ENCODE measurements at regions of chr7 and their contacts with region 1.

Region 1: DNA sequence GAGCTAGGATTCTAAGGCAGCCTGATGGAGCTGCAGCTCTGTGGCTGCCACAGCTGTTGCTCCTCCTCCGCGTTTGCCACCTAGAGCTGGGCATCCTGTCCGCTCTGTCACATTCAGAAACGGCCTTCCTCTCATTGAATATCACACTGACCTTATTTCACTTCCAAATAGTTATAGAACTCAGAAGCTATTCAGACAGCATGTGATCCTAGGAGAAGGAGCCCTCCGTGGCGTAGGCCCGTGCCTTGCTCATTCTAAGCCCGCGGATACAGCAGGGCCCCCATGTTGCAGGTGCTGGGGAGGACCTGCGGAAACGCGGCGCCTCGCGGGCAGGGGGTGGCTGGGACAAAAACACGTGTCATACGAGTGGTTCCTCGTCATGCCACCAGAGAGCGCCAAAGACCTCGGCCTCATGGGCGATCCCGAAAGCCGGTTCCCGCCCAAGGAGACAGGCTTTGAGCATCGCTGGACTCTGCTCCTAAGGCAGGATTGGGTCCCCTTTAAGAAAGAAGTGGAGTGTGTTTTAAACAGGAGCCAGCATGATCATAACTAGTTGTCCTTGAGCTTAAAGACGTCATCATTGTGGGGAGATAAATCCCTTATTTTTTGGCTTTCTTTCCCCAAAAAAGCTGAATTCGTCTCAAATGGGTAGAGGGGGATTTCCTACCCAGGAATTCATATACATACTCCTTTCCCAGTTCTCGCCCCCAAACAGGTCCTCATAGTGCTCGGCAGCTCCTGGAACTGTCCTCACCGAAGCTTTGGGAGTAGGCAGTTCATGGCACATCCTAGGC is 17.9 kb upstream of the FIGNL1 start:
- DNase-seq: peak; percentile 90
- H3K4me3 Mint-ChIP-seq: no peak overlapping the region
- H3K27ac Mint-ChIP-seq: no peak overlapping the region
- H3K4me1 Mint-ChIP-seq: peaks cover 9% of the 10 kb centered on the region
- H3K27me3 Mint-ChIP-seq: no peaks in the 10 kb centered on the region

Region 2: GRCh38 chr7:50119815-50120637 is 348.0 kb before region 1 on chr7:
- CTCF ChIA-PET with region 1: interaction called, 5 read pairs
- intact Hi-C with region 1: loop called (anchors 1 kb)
- DNase-seq: peak; percentile 57
- H3K4me3 Mint-ChIP-seq: no peak overlapping the region
- H3K27ac Mint-ChIP-seq: no peak overlapping the region
- H3K4me1 Mint-ChIP-seq: no peaks in the 10 kb centered on the region
- H3K27me3 Mint-ChIP-seq: no peaks in the 10 kb centered on the region

Region 3: DNA sequence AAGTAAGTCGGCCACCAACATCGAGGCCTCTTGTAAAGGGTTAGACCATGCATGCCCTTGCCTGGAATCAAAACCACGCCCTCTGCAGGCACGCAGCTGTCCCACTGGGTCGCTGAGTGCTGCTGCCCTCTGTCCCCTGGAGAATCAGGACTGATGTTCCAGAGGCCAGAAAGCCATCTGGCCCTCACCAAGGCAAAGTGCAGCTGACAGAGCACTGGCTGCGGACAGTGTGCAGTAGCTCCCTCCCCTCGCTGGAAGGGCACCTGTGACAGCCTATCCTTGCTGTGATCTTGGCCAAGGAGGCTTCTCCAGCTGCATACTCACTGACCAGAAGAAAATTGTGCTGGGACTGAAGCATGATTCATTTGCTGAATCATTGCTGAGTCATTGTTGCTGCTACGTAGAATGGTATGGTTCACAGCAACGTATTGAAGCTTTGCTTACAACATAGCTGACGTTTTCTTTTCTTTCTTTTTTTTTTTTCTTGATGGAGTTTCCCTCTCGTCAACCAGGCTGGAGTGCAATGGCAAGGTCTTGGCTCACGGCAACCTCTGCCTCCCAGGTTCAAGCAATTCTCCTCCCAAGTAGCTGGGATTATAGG is 66.8 kb after region 1 on chr7:
- CTCF ChIA-PET with region 1: interaction called, 4 read pairs
- intact Hi-C with region 1: loop called (anchors 2 kb)
- DNase-seq: peak; percentile 8
- H3K4me3 Mint-ChIP-seq: no peak overlapping the region
- H3K27ac Mint-ChIP-seq: no peak overlapping the region
- H3K4me1 Mint-ChIP-seq: peaks cover 10% of the 10 kb centered on the region
- H3K27me3 Mint-ChIP-seq: peaks cover 2% of the 10 kb centered on the region

Region 4: GRCh38 chr7:50664461-50664922 is 196.5 kb after region 1 on chr7:
- CTCF ChIA-PET with region 1: interaction called, 13 read pairs
- intact Hi-C with region 1: no loop called
- DNase-seq: peak; percentile 47
- H3K4me3 Mint-ChIP-seq: no peak overlapping the region
- H3K27ac Mint-ChIP-seq: no peak overlapping the region
- H3K4me1 Mint-ChIP-seq: peaks cover 62% of the 10 kb centered on the region
- H3K27me3 Mint-ChIP-seq: no peaks in the 10 kb centered on the region

Region 5: DNA sequence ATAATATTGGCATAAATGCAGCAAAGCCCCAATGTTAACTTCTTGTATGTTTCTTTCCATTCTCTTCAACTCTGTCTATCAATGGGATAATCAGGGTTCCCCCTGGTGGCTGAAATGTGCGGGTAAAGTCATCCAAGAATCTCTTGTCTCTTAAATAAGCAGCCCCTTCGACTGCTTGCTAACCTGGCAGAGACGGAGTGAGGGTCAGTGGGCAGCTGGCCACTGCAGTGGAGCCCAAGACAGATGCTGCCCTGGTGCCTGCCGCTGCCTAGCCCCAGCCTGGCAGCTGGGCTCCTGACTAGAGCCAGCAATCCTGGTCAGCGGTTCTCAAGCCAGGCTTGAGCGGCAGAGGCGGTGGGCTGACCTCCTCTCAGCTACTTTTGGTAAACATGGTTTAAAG is 599.7 kb after region 1 on chr7:
- CTCF ChIA-PET with region 1: interaction called, 6 read pairs
- intact Hi-C with region 1: loop called (anchors 1 kb)
- DNase-seq: peak; percentile 75
- H3K4me3 Mint-ChIP-seq: no peak overlapping the region
- H3K27ac Mint-ChIP-seq: no peak overlapping the region
- H3K4me1 Mint-ChIP-seq: no peaks in the 10 kb centered on the region
- H3K27me3 Mint-ChIP-seq: no peaks in the 10 kb centered on the region

Region 6: DNA sequence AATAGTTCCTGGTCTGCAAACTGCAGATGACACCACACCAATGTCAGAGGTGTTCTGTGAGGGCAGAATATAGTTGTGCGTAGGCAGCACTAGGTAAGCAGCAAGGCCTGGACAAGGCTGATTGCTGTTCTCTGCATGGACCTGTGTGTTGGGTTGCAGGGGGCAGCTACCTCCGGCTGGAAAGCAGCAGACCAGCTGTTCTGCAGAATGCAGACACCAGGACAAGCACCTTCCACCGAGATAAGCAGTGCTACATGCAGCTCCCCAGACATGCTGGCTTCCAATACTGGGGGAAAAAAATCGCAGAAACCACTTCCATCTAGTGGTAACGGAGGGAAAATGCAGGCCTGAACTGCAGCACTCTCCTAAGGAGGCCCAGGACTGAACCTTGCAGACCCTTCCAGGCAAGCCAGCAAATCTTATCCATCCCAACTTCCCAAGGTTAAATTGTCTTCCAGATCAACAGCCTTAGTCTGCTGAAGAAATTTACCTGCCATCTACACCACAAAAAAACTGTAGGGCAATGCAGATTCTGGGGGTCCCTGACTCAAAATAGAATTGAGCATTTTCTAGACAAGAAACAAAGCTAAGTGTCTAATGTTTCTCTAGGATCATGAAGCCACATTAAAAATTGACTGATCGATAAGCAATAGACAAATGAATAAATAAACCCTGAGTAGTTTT is 899.1 kb after region 1 on chr7:
- CTCF ChIA-PET with region 1: no interaction called
- intact Hi-C with region 1: loop called (anchors 5 kb)
- DNase-seq: peak; percentile 25
- H3K4me3 Mint-ChIP-seq: no peak overlapping the region
- H3K27ac Mint-ChIP-seq: no peak overlapping the region
- H3K4me1 Mint-ChIP-seq: no peaks in the 10 kb centered on the region
- H3K27me3 Mint-ChIP-seq: no peaks in the 10 kb centered on the region